Left ventricle myocardium inferior (tissue), 1 donor: ENCODE measurements at regions of chr4 and their contacts with region 1.

Region 1: GRCh38 chr4:17544205-17544604 is 29.2 kb downstream of the CLRN2 start:
- DNase-seq: no peak
- H3K4me3 ChIP-seq: no peak overlapping the region
- H3K27ac ChIP-seq: no peak overlapping the region
- H3K4me1 ChIP-seq: peaks cover 10% of the 10 kb centered on the region
- H3K27me3 ChIP-seq: no peaks in the 10 kb centered on the region
- CTCF ChIP-seq: no peak

Region 2: DNA sequence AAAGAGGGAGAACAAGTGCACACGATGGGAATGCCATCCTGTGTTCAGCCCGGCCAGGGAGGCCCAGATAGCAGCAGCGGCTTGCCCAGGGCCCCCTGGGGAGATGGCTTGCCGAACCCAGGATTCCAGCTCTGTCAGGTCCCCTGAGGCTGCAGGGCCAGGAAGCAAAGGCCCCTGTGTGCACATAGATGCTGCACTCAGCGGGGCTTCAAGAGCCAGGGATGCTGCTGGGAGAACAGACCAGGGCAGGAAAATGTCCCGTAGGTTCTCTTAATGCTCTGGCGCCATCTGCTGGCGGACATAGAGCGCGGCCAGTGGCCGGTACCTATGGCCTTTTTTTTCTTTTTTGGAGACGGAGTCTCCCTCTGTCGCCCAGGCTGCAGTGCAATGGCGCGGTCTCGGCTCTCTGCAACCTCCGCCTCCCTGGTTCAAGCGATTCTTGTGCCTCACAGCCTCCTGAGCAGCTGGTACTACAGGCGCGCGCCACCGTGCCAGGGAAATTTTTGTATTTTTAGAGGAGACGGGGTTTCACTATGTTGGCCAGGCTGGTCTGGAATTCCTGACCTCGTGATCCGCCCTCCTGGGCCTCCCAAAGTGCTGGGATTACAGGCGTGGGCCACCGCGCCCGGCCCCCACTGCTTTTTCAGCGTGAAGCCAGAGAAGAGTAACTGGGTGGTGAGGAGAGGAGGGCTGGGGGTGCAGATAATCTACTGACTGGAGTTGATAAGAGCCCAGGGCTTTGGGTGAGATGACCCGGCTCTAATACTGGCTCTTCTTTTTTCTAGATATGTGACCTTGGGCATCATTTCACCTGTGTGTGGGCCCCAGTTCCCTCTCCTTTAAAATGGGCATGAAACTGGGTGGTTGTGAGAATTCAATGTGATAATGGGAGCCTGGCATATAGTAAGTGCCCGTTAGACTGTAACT is 92.8 kb after region 1 on chr4:
- intact Hi-C with region 1: loop called (anchors 2 kb)
- DNase-seq: peak; percentile 69
- H3K4me3 ChIP-seq: no peak overlapping the region
- H3K27ac ChIP-seq: no peak overlapping the region
- H3K4me1 ChIP-seq: peaks cover 4% of the 10 kb centered on the region
- H3K27me3 ChIP-seq: no peaks in the 10 kb centered on the region
- CTCF ChIP-seq: peak; percentile 95

Region 3: DNA sequence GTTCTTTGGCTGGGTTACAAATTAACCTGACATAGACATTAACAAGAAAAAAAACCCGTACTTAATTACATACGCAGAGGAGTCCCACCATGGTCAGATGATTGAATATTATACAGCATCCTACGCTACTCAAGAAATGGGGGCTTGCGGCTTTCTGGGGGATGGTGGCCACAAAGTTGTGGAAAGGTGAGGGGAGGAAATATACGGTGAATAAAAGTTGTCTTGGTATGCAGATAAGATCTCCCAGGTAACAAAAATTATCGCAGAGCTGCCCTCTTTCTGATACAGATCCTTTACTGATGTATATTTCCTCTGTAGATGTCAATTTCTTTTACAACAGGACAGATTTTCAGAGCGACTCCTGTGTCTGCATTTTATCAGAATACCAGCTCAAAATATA is 265.5 kb after region 1 on chr4:
- intact Hi-C with region 1: loop called (anchors 10 kb)
- DNase-seq: no peak
- H3K4me3 ChIP-seq: peak overlapping the region; percentile 82
- H3K27ac ChIP-seq: peak overlapping the region; percentile 97
- H3K4me1 ChIP-seq: peaks cover 58% of the 10 kb centered on the region
- H3K27me3 ChIP-seq: no peaks in the 10 kb centered on the region
- CTCF ChIP-seq: no peak